Mammary epithelial cell (primary cell): ENCODE measurements at regions of chrX and their contacts with region 1.

Region 1: DNA sequence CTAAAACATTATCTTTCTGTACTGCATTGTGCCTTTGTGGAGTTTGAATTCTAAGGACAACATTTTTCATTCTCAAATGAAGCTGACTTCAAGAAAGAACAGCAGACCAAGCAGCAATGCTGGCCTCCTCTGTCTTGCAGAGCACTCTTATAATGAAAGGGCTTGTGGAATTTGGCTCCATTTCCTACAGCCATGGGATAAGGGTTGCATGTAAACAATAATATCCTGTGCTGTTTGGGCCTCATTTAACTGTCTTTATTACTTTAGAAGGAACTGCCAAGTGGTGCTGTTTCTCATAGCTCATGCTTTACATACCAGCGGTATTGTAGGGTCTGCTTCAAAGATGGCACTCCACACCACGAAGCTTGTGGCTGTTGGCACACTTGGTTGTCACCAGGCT is 111.4 kb upstream of the EOLA2 start:
- DNase-seq: no peak
- H3K4me3 ChIP-seq: no peak overlapping the region
- H3K27ac ChIP-seq: no peak overlapping the region
- H3K4me1 ChIP-seq: peaks cover 26% of the 10 kb centered on the region
- H3K27me3 ChIP-seq: no peaks in the 10 kb centered on the region
- CTCF ChIP-seq: no peak

Region 2: GRCh38 chrX:150146269-150146896 is 96.7 kb after region 1 on chrX:
- CTCF ChIA-PET with region 1: no interaction called
- dilution Hi-C with region 1: loop called (anchors 5 kb)
- in situ Hi-C with region 1: no loop called
- intact Hi-C with region 1: no loop called
- DNase-seq: no peak
- H3K4me3 ChIP-seq: no peak overlapping the region
- H3K27ac ChIP-seq: no peak overlapping the region
- H3K4me1 ChIP-seq: no peaks in the 10 kb centered on the region
- H3K27me3 ChIP-seq: no peaks in the 10 kb centered on the region
- CTCF ChIP-seq: peak; percentile 2 to 41

Region 3: DNA sequence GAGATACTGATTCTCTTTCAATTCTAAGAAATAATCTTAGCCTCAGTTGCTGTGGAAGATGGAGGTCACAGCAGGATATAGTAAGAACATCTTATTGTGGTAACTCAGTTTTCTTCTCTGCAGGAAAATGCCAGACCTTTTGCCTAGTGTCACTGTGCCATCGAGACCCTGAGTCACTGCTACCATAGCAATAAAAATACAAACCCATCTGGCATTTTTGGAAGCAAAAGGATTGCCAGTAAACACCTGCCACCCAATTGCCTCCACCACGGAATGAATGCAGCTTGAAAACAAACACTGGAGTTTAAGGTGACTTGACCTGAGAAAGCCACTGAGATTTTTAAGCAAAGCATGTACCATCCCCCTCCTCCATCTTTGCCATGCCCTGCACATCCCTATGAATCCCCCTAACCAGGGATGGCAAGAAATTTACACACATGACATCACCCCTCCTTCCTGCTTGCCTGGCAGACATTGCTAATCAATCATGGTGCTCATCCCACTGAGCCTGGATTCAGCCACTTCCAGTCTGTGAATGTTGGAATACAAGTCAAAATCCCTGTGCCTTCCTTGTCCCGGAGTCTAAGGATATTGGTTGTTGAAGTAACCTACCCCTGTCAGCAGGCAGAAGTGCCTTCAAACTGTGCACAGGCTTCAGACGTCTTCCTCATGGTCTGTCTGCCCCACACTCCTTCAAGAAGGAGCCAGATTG is 253.9 kb after region 1 on chrX:
- CTCF ChIA-PET with region 1: no interaction called
- dilution Hi-C with region 1: no loop called
- in situ Hi-C with region 1: no loop called
- intact Hi-C with region 1: no loop called
- DNase-seq: no peak
- H3K4me3 ChIP-seq: no peak overlapping the region
- H3K27ac ChIP-seq: no peak overlapping the region
- H3K4me1 ChIP-seq: no peaks in the 10 kb centered on the region
- H3K27me3 ChIP-seq: no peaks in the 10 kb centered on the region
- CTCF ChIP-seq: no peak